ENCODE measurements at regions of chr2 and their contacts with region 1.

Region 1: GRCh38 chr2:41743324-41743723 is 304.5 kb upstream of the PKDCC start:
- DNase-seq: no peak
- H3K27ac ChIP-seq: no peak overlapping the region
- CTCF ChIP-seq: no peak

Region 2: GRCh38 chr2:41496908-41497307 is 246.4 kb before region 1 on chr2:
- CTCF ChIA-PET with region 1: interaction called, 11 read pairs
- POLR2A ChIA-PET with region 1: no interaction called
- DNase-seq: no peak
- H3K27ac ChIP-seq: no peak overlapping the region
- CTCF ChIP-seq: no peak